ENCODE measurements at regions of chr3 and their contacts with region 1.

Region 1: DNA sequence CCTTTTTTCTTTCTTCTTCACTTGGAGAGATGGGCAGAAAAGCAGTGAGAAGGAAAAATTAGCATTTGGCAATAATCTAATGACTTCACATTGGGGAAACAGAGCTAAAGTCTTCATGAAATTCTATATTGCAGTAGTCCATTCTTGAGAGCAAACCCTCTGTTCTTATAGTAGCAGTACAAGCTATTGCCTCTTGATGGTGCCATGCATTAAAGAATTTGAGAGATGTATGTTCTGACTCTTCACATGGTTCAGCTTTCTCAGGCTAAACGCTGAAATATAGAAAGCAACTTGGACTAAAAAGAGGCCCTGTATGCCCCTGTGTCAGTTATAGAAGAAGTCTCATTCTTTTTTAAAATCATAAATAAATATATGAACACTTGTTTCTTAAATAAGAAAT is 36.0 kb downstream of the PHLDB2 start:
- DNase-seq: peak in 1 of 3 donors; percentile 8
- H3K4me3 ChIP-seq: no peak overlapping the region
- H3K4me3 Mint-ChIP-seq: no peak overlapping the region
- H3K27ac ChIP-seq: no peak overlapping the region
- H3K27ac Mint-ChIP-seq: no peak overlapping the region
- H3K4me1 ChIP-seq: no peaks in the 10 kb centered on the region
- H3K4me1 Mint-ChIP-seq: no peaks in the 10 kb centered on the region
- H3K27me3 ChIP-seq: no peaks in the 10 kb centered on the region
- H3K27me3 Mint-ChIP-seq: peaks cover 0 to 2% (median 2%) of the 10 kb centered on the region in 3 donors
- CTCF ChIP-seq: peak; percentile 17

Region 2: GRCh38 chr3:111936191-111936841 is 41.2 kb after region 1 on chr3:
- intact Hi-C with region 1: no loop called
- DNase-seq: no peak
- H3K4me3 ChIP-seq: no peak overlapping the region
- H3K4me3 Mint-ChIP-seq: no peak overlapping the region
- H3K27ac ChIP-seq: no peak overlapping the region
- H3K27ac Mint-ChIP-seq: no peak overlapping the region
- H3K4me1 ChIP-seq: no peaks in the 10 kb centered on the region
- H3K4me1 Mint-ChIP-seq: no peaks in the 10 kb centered on the region
- H3K27me3 ChIP-seq: no peaks in the 10 kb centered on the region
- H3K27me3 Mint-ChIP-seq: peaks cover 0 to 1% (median 0%) of the 10 kb centered on the region in 3 donors
- CTCF ChIP-seq: no peak

Region 3: DNA sequence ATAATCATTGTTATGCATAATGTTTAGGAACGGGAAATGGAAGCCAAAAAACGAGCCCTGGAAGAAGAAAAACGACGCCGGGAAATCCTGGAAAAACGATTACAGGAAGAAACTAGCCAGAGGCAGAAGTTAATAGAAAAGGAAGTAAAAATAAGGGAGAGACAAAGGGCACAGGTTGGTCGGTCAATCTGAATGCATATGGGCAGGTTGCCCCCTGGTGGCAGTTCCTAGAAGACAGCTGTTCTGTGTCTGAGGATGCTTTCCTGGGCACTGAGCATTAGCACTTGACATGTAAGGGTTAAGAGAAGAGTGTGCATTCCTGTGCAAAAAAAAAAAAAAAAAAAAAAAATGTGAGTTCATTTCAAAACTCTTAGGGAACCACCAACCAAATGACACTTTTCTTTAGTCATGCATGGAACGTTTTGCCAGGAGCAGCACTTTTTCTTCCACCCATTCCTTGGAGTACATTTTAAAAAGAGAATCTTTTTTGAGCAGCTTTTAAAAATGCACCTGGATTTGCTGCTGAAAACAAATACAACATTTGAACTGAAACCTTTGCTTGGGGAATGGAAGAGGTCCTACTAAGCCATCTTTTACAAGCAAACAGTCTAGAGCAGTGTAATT is 72.7 kb after region 1 on chr3:
- intact Hi-C with region 1: loop called in 1 of 2 experiments (anchors 10 kb)
- DNase-seq: peak; percentile 63 to 84 (median 80)
- H3K4me3 ChIP-seq: no peak overlapping the region
- H3K4me3 Mint-ChIP-seq: peak overlapping the region in 1 of 2 donors; percentile 52
- H3K27ac ChIP-seq: no peak overlapping the region
- H3K27ac Mint-ChIP-seq: no peak overlapping the region
- H3K4me1 ChIP-seq: peaks cover 3 to 7% of the 10 kb centered on the region in 2 donors
- H3K4me1 Mint-ChIP-seq: peaks cover 8% of the 10 kb centered on the region
- H3K27me3 ChIP-seq: no peaks in the 10 kb centered on the region
- H3K27me3 Mint-ChIP-seq: peaks cover 0 to 2% (median 1%) of the 10 kb centered on the region in 3 donors
- CTCF ChIP-seq: peak; percentile 93

Measured in CD14-positive monocyte (primary cell).